Heart right ventricle (tissue), 16 donors: ENCODE measurements at regions of chr22 and their contacts with region 1.

Region 1: GRCh38 chr22:26330966-26331625 is 98.0 kb upstream of the ASPHD2 start:
- DNase-seq: peak in 1 of 2 donors; percentile 15
- ATAC-seq: peak in 2 of 8 donors; percentile 49 to 65
- H3K4me3 ChIP-seq: no peak overlapping the region
- H3K27ac ChIP-seq: no peak overlapping the region
- H3K4me1 ChIP-seq: no peaks in the 10 kb centered on the region
- H3K27me3 ChIP-seq: peaks cover 0 to 30% (median 16%) of the 10 kb centered on the region in 7 donors
- CTCF ChIP-seq: peak; percentile 47 to 83 (median 78)

Region 2: GRCh38 chr22:26172389-26172990 is 158.6 kb before region 1 on chr22:
- intact Hi-C with region 1: loop called in 1 of 10 experiments (anchors 10 kb)
- DNase-seq: peak in 1 of 2 donors; percentile 9
- ATAC-seq: no peak
- H3K4me3 ChIP-seq: no peak overlapping the region
- H3K27ac ChIP-seq: no peak overlapping the region
- H3K4me1 ChIP-seq: peaks cover 0 to 17% (median 12%) of the 10 kb centered on the region in 9 donors
- H3K27me3 ChIP-seq: peaks cover 0 to 95% (median 77%) of the 10 kb centered on the region in 7 donors
- CTCF ChIP-seq: peak; percentile 8 to 66 (median 56)